Activated B cell treated with CpG ODN at 0.5 μM for 24 hours (primary cell): ENCODE measurements at regions of chr3 and their contacts with region 1.

Region 1: GRCh38 chr3:120095226-120095978 is 1.2 kb upstream of the GSK3B start:
- DNase-seq: peak; percentile 85
- ATAC-seq: peak; percentile 20
- H3K4me3 Mint-ChIP-seq: no peak overlapping the region
- H3K27ac Mint-ChIP-seq: no peak overlapping the region
- H3K4me1 Mint-ChIP-seq: peaks cover 12% of the 10 kb centered on the region
- H3K27me3 Mint-ChIP-seq: no peaks in the 10 kb centered on the region
- CTCF ChIP-seq: no peak

Region 2: DNA sequence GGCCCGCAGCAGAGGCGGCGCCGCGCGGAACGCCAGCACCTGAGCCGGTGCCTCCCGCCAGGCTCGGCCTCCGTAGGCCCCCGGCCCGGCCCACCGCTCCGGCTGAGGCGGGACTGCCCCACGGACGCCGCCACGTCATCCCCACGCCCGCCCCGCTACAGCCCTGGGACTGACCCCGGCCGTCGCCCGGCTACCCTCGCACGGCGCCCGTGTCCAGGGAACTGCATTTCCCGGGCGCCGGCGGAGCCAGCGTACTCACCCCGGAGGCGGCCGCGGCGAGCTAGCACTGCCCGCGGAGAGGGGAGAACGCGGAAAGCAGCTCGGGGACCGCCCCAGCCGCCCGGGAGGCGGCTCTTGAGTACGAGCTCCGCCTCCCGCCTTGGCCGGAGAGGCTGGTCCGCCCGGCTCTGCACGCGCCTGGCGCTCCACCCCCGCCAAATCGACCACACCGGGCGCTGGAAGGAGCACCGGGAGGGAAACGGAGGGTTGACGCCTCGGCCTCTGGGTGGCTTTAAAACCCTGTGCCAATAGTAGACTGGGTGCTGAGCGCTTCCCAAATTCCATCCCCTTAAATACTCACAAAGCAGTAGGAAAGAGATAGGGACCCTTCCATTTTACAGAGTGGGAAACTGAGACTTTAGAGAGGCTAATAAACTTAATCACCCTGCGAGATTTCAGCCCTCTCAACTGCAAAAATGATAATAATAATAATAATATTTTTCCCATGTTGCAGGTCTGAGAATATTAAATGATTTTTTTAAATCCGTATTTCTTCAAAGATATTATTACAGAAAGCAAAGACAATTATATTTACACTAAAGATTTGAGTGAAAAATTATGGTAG is 854.6 kb before region 1 on chr3 and contains the start of gene B4GALT4:
- CTCF ChIA-PET with region 1: no interaction called
- POLR2A ChIA-PET with region 1: interaction called, 6 read pairs
- intact Hi-C with region 1: loop called (anchors 1 kb)
- DNase-seq: peak; percentile 78
- ATAC-seq: peak; percentile 86
- H3K4me3 Mint-ChIP-seq: peak within 1 kb of the TSS; percentile 87
- H3K27ac Mint-ChIP-seq: peak within 1 kb of the TSS; percentile 82
- H3K4me1 Mint-ChIP-seq: peaks cover 36% of the 10 kb centered on the region
- H3K27me3 Mint-ChIP-seq: no peaks in the 10 kb centered on the region
- CTCF ChIP-seq: no peak
- total RNA-seq, gene B4GALT4: 13.8 and 18.0 TPM in 2 replicates

Region 3: GRCh38 chr3:119463171-119464169 is 631.9 kb before region 1 on chr3 and contains the start of gene TMEM39A:
- CTCF ChIA-PET with region 1: no interaction called
- POLR2A ChIA-PET with region 1: interaction called, 19 read pairs
- intact Hi-C with region 1: loop called (anchors 1 kb)
- DNase-seq: peak; percentile 99
- ATAC-seq: peak; percentile 88
- H3K4me3 Mint-ChIP-seq: peak within 1 kb of the TSS; percentile 98
- H3K27ac Mint-ChIP-seq: peak within 1 kb of the TSS; percentile 97
- H3K4me1 Mint-ChIP-seq: peaks cover 34% of the 10 kb centered on the region
- H3K27me3 Mint-ChIP-seq: no peaks in the 10 kb centered on the region
- CTCF ChIP-seq: no peak
- total RNA-seq, gene TMEM39A: 33.7 and 45.6 TPM in 2 replicates

Region 4: DNA sequence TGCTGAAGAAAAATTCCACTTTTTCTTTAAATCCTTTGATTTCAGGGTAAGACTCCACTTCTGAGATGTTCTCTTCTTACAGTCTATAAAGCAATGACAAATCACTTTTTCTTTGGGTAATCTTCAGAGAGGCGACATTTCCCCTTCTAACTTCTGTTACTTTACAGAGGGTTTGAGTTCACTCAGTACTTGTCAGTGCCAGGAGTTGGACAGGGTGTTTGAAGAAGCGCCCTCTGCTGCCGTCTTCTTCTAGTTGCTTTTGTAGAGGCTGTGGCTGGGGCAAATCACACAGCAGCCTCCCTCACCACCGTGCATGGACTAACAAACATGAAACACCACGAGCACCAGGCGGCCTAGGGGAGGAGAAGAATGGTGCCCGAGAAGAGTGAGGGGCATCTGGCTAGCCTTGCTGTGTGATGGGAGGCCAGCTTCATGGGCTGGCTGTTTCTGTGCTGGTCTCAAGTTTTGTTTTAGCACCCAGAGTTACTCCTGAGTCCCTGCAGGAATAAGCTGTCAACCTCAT is 535.9 kb before region 1 on chr3 and contains the start of gene CD80:
- CTCF ChIA-PET with region 1: no interaction called
- POLR2A ChIA-PET with region 1: interaction called, 5 read pairs
- intact Hi-C with region 1: loop called (anchors 1 kb)
- DNase-seq: peak; percentile 58
- ATAC-seq: peak; percentile 54
- H3K4me3 Mint-ChIP-seq: peak within 1 kb of the TSS; percentile 90
- H3K27ac Mint-ChIP-seq: peak within 1 kb of the TSS; percentile 88
- H3K4me1 Mint-ChIP-seq: peaks cover 92% of the 10 kb centered on the region
- H3K27me3 Mint-ChIP-seq: no peaks in the 10 kb centered on the region
- CTCF ChIP-seq: no peak
- total RNA-seq, gene CD80: 71.4 and 88.1 TPM in 2 replicates

Region 5: DNA sequence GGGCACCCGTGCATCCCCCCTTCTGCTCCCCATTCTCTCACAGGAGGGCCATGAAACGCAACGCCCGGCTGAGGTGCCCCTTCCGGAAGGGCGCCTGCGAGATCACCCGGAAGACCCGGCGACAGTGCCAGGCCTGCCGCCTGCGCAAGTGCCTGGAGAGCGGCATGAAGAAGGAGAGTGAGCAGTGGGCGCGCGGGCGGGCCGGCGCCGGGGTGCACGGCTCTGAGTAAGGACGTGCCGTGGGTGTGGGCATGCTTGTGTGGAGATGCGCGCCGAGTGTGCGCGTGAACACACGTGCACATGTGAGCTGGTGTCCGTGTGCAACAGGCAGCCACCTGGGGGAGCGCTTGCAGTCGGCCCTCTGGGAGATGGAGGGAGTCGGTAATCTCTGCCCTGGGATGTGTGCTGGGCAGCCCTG is 285.4 kb before region 1 on chr3:
- CTCF ChIA-PET with region 1: no interaction called
- POLR2A ChIA-PET with region 1: interaction called, 10 read pairs
- intact Hi-C with region 1: loop called (anchors 1 kb)
- DNase-seq: peak; percentile 51
- ATAC-seq: peak; percentile 85
- H3K4me3 Mint-ChIP-seq: peak overlapping the region; percentile 90
- H3K27ac Mint-ChIP-seq: peak overlapping the region; percentile 75
- H3K4me1 Mint-ChIP-seq: peaks cover 9% of the 10 kb centered on the region
- H3K27me3 Mint-ChIP-seq: no peaks in the 10 kb centered on the region
- CTCF ChIP-seq: no peak

Region 6: GRCh38 chr3:120081719-120082118 is 13.7 kb before region 1 on chr3:
- CTCF ChIA-PET with region 1: interaction called, 3 read pairs
- POLR2A ChIA-PET with region 1: interaction called, 11 read pairs
- intact Hi-C with region 1: no loop called
- DNase-seq: no peak
- ATAC-seq: no peak
- H3K4me3 Mint-ChIP-seq: no peak overlapping the region
- H3K27ac Mint-ChIP-seq: no peak overlapping the region
- H3K4me1 Mint-ChIP-seq: peaks cover 40% of the 10 kb centered on the region
- H3K27me3 Mint-ChIP-seq: no peaks in the 10 kb centered on the region
- CTCF ChIP-seq: no peak

Region 7: DNA sequence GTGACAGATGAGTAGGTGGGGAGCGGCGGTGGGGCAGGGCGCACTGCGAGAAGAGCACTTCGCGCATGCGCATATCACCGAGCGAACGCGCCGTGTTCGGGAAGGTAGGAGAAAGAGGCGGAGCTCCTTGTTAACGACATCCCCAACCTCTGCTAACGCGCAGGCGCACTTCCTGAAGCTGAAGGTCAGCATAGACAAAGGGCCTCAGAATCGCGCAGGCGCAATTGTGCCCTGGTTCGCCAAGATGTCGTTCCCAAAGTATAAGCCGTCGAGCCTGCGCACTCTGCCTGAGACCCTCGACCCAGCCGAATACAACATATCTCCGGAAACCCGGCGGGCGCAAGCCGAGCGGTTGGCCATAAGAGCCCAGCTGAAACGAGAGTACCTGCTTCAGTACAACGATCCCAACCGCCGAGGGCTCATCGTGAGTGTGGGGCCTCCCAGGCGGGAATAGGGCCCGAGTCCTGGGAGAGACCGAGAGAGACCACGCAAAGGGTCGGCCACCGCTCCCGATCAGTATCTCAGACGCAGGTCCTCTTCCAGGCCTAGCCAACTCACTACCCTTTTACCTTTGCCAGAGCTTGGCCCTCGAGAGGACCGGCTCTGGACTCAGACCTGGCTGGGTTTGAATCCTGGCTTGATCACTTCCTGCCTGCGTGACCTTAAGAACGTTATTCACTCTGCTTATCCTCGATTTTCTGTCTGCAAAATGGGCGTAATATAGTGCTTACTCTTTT is 500.9 kb after region 1 on chr3 and contains the start of gene NDUFB4:
- CTCF ChIA-PET with region 1: no interaction called
- POLR2A ChIA-PET with region 1: interaction called, 17 read pairs
- intact Hi-C with region 1: loop called (anchors 2 kb)
- DNase-seq: peak; percentile 82
- ATAC-seq: peak; percentile 96
- H3K4me3 Mint-ChIP-seq: peak within 1 kb of the TSS; percentile 96
- H3K27ac Mint-ChIP-seq: peak within 1 kb of the TSS; percentile 94
- H3K4me1 Mint-ChIP-seq: peaks cover 11% of the 10 kb centered on the region
- H3K27me3 Mint-ChIP-seq: peaks cover 2% of the 10 kb centered on the region
- CTCF ChIP-seq: no peak
- total RNA-seq, gene NDUFB4: 80.4 and 86.3 TPM in 2 replicates

Region 8: GRCh38 chr3:120726784-120727183 is 631.4 kb after region 1 on chr3:
- CTCF ChIA-PET with region 1: no interaction called
- POLR2A ChIA-PET with region 1: no interaction called
- intact Hi-C with region 1: no loop called
- DNase-seq: no peak
- ATAC-seq: no peak
- H3K4me3 Mint-ChIP-seq: no peak overlapping the region
- H3K27ac Mint-ChIP-seq: no peak overlapping the region
- H3K4me1 Mint-ChIP-seq: no peaks in the 10 kb centered on the region
- H3K27me3 Mint-ChIP-seq: no peaks in the 10 kb centered on the region
- CTCF ChIP-seq: no peak